ENCODE measurements at regions of chr12 and their contacts with region 1.

Region 1: GRCh38 chr12:85949253-85949652 is 75.2 kb downstream of the NTS start:
- ATAC-seq: peak in 1 of 8 experiments; percentile 37
- H3K4me3 ChIP-seq: no peak overlapping the region
- H3K27ac ChIP-seq: no peak overlapping the region
- H3K4me1 ChIP-seq: no peaks in the 10 kb centered on the region

Region 2: GRCh38 chr12:85363382-85364190 is 585.7 kb before region 1 on chr12:
- in situ Hi-C with region 1: no loop called
- ATAC-seq: peak in 2 of 8 experiments; percentile 46 to 48
- H3K4me3 ChIP-seq: no peak overlapping the region
- H3K27ac ChIP-seq: no peak overlapping the region
- H3K4me1 ChIP-seq: no peaks in the 10 kb centered on the region

Region 3: DNA sequence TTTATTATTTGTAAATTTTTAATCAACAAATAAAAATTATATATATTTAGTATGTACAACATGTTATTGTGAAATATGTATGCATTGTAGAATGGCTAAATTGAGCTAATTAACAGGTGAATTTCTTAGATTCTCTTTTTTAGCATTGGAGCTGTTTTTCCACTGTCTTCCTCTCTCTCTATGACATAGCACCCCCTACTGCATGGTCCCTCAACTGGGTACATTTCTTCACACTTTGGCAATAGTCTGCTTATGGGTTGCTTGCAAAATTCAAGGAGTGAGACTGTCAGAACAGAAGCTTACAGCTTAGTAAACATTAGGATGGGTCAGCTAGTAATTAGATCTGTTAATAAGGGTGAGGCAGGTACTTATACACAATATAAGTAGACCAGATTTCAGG is 965.5 kb after region 1 on chr12:
- in situ Hi-C with region 1: loop called in 1 of 9 experiments (anchors 25 kb)
- ATAC-seq: peak in 3 of 8 experiments; percentile 52 to 67 (median 54)
- H3K4me3 ChIP-seq: no peak overlapping the region
- H3K27ac ChIP-seq: no peak overlapping the region
- H3K4me1 ChIP-seq: no peaks in the 10 kb centered on the region

Measured in motor neuron (in vitro differentiated cells).